Activated T-helper 1 cell treated with anti-CD3 and anti-CD28 coated beads, Interleukin-12 subunit alpha, Interleukin-12 subunit beta, Interleukin-2, Interleukin-4 antibody, amounts not matched to agents 30 ng/mL and 10 ng/mL and 1 ng/mL, durations not matched to agents 14 hours and 24 hours and 36 hours (primary cell): ENCODE measurements at regions of chr13 and their contacts with region 1.

Region 1: GRCh38 chr13:51729866-51730546 is 74.0 kb downstream of the DHRS12 start:
- DNase-seq: no peak
- H3K4me3 Mint-ChIP-seq: no peak overlapping the region
- H3K27ac Mint-ChIP-seq: no peak overlapping the region
- H3K4me1 Mint-ChIP-seq: peaks cover 13% of the 10 kb centered on the region
- H3K27me3 Mint-ChIP-seq: no peaks in the 10 kb centered on the region

Region 2: DNA sequence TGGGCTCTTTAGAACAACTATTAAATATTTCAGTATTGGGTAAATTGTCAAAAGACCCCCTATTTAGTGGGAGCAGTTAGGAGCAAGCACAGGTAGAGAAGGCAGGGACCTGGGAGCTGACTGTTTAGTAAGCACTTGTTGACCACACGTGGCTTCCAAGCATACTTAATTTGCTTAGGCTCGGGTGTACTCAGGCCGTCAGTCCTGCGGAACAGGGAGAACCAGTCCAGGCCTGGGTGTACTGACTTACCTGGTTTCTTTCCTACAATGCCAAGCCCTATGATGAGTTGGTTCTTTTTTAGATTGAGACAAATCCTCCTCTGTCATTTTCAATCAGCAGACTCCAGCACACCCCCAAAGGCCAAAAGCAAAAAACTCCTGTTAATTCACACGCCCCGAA is 55.7 kb before region 1 on chr13:
- intact Hi-C with region 1: loop called (anchors 10 kb)
- DNase-seq: no peak
- H3K4me3 Mint-ChIP-seq: no peak overlapping the region
- H3K27ac Mint-ChIP-seq: no peak overlapping the region
- H3K4me1 Mint-ChIP-seq: no peaks in the 10 kb centered on the region
- H3K27me3 Mint-ChIP-seq: no peaks in the 10 kb centered on the region